ENCODE measurements at regions of chr1 and their contacts with region 1.

Region 1: DNA sequence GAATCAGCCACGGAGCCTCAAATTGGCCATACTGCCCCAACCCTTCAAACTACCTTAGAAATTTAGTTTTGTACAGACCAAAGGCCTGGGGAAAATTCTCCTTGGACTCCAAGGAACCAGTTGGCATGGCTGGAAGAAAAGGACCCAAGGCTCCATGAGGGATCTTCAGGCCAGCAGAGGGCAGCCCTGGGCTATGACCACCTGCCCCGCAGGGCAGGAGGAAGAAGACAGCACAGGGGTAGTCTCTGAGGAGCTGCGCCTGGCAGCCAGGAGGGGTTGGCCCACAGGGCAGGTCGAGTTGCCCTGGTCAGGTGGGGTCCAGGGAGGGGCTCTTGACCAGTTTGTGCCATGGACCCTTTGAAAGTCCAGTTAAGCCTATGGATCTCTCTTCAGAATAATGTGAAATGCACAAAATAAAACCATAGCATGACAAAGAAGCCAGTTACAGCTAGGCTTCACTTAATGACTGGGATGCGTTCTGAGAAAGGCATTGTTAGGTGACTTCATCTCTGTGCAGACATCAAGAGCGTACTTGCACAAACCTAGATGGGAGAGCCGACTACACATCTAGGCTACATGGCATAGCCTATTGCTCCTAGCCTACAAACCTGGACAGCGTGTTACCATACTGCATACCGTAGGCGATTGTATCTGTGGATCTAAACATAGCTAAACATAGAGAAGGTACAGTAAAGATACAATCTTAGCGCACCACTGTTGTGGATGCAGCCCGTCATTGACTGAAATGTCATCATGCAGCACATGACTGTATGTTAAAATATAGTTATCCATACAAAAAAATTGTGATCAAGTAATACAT is 26.1 kb downstream of the CACNA1S start:
- DNase-seq: peak in 1 of 2 donors; percentile 59
- ATAC-seq: peak in 2 of 3 donors; percentile 36 to 71
- H3K4me3 ChIP-seq: no peak overlapping the region
- H3K4me3 Mint-ChIP-seq: no peak overlapping the region
- H3K27ac ChIP-seq: no peak overlapping the region
- H3K27ac Mint-ChIP-seq: no peak overlapping the region
- H3K4me1 ChIP-seq: no peaks in the 10 kb centered on the region
- H3K4me1 Mint-ChIP-seq: no peaks in the 10 kb centered on the region
- H3K27me3 ChIP-seq: peaks cover 2% of the 10 kb centered on the region
- H3K27me3 Mint-ChIP-seq: peaks cover 16% of the 10 kb centered on the region in 2 donors
- CTCF ChIP-seq: peak; percentile 34

Region 2: DNA sequence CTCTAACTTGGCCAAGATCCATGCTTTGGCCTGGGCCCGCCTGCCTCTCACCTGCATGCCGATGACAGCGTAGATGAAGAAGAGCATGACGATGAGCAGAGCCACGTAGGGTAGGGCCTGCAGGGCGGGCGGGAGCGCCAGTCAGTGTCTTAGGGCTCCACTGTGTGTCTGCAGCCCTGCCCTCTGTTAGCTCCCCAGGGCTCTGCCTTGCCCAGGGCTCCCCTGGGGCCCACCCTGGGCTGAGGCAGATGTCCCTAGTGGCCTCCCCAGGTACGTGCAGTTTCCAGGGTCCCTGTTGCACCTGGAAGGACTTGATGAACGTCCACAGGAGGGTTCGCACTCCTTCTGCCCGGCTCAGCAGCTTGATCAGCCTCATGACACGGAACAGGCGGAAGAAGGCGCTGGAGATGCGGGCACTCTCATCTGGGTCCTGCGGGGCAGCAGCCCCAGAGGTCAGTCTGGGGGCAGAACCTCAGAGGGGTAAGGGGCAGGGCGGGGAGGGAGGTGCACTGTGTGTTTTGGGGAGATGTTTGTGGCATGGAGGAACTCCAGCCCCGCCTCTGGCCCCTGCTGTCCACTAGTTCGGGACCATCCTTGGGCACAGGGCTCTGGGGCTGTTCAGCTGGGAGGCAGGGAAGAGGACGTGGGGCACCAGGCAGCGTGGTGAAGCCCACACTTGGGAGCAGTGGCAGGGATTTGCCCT is 32.8 kb before region 1 on chr1:
- intact Hi-C with region 1: no loop called
- DNase-seq: no peak
- ATAC-seq: no peak
- H3K4me3 ChIP-seq: no peak overlapping the region
- H3K4me3 Mint-ChIP-seq: no peak overlapping the region
- H3K27ac ChIP-seq: no peak overlapping the region
- H3K27ac Mint-ChIP-seq: no peak overlapping the region
- H3K4me1 ChIP-seq: peaks cover 3% of the 10 kb centered on the region
- H3K4me1 Mint-ChIP-seq: peaks cover 0 to 4% of the 10 kb centered on the region in 2 donors
- H3K27me3 ChIP-seq: no peaks in the 10 kb centered on the region
- H3K27me3 Mint-ChIP-seq: peaks cover 0 to 2% of the 10 kb centered on the region in 2 donors
- CTCF ChIP-seq: no peak

Region 3: DNA sequence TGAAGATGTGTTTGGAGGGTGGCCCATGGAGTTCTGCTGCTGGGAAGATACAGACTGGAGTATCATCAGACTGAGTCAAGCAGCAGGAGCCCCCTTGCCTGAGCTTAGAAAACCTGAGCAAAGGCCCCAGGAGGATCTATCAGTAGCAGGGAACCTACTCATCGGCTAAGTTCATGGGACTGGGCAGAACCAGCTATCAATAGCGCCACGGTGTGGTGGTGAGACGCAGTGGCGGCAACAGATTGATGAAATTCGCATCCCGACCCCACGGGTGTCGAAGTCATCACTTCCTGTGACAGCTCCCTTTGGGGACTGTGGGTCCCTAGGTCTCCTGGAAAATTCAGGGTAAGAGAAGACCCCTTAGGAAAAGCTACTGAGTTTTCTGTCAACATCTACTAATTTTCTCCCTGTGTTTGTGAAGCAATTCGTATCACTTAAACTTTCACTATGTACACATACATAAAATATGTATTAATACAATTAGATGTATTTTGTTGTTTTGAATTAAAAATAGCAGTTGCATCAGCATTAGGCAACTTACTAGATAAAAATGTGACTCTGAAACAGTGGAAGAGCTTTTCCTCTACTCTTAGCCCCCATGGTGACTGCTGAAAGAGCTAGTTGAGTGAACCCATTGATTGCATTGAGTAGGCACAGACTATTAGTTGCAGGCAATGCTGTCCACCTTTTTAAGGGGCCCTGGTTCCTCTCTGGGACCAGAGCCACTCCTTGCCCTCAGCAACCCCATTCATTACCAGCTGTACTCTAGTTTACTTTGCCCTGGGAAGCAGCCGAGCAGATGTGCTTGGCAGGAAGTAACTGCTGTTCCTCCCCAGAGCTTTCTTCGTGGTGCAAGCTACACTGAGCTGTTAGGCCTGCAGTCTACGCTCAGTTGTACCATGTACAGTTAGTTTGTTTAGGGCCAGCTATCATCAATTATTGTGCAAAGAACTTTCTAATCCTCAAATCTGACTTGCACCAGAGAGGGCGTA is 33.4 kb after region 1 on chr1:
- intact Hi-C with region 1: loop called (anchors 2 kb)
- DNase-seq: peak; percentile 33 to 75
- ATAC-seq: peak; percentile 50 to 54 (median 54)
- H3K4me3 ChIP-seq: no peak overlapping the region
- H3K4me3 Mint-ChIP-seq: no peak overlapping the region
- H3K27ac ChIP-seq: no peak overlapping the region
- H3K27ac Mint-ChIP-seq: no peak overlapping the region
- H3K4me1 ChIP-seq: peaks cover 3% of the 10 kb centered on the region
- H3K4me1 Mint-ChIP-seq: peaks cover 2 to 6% of the 10 kb centered on the region in 2 donors
- H3K27me3 ChIP-seq: peaks cover 7% of the 10 kb centered on the region
- H3K27me3 Mint-ChIP-seq: peaks cover 12 to 18% of the 10 kb centered on the region in 2 donors
- CTCF ChIP-seq: peak; percentile 61

Region 4: DNA sequence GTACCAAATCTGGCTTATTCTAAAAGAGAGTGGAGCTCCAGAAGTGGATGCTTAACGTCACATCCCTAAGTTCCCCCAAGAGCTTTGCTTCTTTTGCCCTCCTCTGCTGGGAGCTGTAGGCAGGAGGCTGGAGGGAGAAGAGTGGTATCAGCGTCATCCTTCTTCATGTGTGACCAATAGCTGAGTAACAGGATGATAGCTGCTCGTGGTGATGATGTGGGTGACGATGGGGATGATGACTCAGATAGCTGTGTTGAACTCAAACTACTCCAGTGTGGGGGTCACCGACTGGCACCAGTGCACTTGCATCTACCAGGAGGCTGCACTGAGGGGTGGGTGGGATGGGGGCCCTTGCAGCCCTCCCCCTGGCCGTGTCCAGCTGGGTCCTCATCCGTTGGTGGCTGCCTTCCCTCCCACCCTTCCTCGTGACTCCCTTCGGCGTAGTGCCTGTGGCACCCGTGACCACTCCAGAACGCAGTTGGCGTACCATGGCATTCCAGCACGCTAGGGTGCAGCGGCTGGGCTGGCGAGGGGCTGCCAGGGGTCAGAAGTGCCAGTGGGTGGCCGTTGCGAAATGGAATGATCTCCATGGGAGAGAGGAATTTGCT is 105.6 kb after region 1 on chr1:
- intact Hi-C with region 1: no loop called
- DNase-seq: no peak
- ATAC-seq: peak in 2 of 3 donors; percentile 29 to 75
- H3K4me3 ChIP-seq: no peak overlapping the region
- H3K4me3 Mint-ChIP-seq: no peak overlapping the region
- H3K27ac ChIP-seq: no peak overlapping the region
- H3K27ac Mint-ChIP-seq: no peak overlapping the region
- H3K4me1 ChIP-seq: no peaks in the 10 kb centered on the region
- H3K4me1 Mint-ChIP-seq: no peaks in the 10 kb centered on the region
- H3K27me3 ChIP-seq: no peaks in the 10 kb centered on the region
- H3K27me3 Mint-ChIP-seq: peaks cover 7 to 13% of the 10 kb centered on the region in 2 donors
- CTCF ChIP-seq: no peak

Measured in natural killer cell (primary cell).